AG04450 (cell line): ENCODE measurements at regions of chr15 and their contacts with region 1.

Region 1: DNA sequence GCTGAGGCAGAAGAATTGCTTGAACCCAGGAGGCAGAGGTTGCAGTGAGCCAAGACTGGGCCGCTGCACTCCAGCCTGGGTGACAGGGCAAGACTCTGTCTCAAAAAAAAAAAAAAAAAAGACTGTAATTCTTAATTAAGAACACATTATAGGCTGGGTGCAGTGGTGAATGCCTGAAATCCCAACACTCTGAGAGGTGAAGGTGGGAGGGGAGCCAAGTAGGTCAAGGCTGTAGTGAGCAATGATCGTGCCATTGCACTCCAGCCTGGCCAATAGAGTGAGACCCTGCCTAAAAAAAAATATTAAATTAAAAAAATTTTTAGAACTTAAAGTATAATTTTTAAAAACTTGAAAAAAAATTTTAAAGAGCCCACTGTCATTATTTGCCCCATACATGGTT is 13.4 kb upstream of the ARPIN start:
- DNase-seq: no peak
- H3K4me3 ChIP-seq: no peak overlapping the region
- H3K27ac ChIP-seq: no peak overlapping the region
- H3K27me3 ChIP-seq: peaks cover 3% of the 10 kb centered on the region
- CTCF ChIP-seq: no peak

Region 2: DNA sequence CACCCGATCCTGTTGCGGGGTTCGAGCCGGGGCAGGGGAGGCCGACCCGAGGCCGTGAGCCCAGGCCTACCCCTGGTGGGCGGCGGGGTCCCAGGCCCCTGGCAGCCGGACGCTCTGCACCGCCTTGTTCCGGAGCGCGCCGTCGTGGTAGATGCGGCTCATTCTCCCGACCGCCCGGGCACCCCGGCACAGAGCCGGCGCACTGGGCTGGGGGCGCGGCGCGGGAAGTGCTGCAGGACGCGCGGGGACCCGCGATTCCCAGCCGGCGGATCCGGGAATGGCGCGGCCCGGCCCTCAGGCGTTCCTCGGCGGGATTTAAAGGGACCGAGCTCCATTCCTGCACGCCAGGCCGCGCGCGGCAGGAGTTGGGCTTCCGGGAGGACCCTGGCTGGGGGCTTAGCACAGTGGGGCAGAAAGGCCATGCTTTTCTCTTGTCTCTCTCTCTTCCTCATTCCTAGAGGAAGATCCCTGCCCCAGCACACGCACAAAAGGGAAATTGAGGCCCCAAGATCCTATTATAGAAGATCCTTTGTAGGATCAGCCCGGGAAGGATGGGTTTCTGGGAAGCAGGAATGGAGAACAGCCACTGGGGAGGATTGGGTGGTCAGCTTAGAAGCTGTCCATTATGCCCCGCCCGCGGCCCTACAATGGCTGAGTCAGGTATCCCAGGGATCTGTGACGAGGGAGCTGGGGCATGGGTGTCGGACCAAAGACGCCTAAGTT is 13.3 kb before region 1 on chr15 and contains the start of gene ARPIN:
- CTCF ChIA-PET with region 1: no interaction called
- POLR2A ChIA-PET with region 1: no interaction called
- DNase-seq: no peak
- H3K4me3 ChIP-seq: peak within 1 kb of the TSS; percentile 71
- H3K27ac ChIP-seq: peak within 1 kb of the TSS; percentile 31
- H3K27me3 ChIP-seq: no peaks in the 10 kb centered on the region
- CTCF ChIP-seq: no peak
- polyA plus RNA-seq, gene ARPIN: 11.1 and 11.8 TPM in 2 replicates

Region 3: GRCh38 chr15:89936051-89936785 is 10.1 kb after region 1 on chr15:
- CTCF ChIA-PET with region 1: interaction called, 11 read pairs
- POLR2A ChIA-PET with region 1: no interaction called
- DNase-seq: no peak
- H3K4me3 ChIP-seq: no peak overlapping the region
- H3K27ac ChIP-seq: no peak overlapping the region
- H3K27me3 ChIP-seq: peaks cover 12% of the 10 kb centered on the region
- CTCF ChIP-seq: no peak